ENCODE measurements at regions of chr3 and their contacts with region 1.

Region 1: DNA sequence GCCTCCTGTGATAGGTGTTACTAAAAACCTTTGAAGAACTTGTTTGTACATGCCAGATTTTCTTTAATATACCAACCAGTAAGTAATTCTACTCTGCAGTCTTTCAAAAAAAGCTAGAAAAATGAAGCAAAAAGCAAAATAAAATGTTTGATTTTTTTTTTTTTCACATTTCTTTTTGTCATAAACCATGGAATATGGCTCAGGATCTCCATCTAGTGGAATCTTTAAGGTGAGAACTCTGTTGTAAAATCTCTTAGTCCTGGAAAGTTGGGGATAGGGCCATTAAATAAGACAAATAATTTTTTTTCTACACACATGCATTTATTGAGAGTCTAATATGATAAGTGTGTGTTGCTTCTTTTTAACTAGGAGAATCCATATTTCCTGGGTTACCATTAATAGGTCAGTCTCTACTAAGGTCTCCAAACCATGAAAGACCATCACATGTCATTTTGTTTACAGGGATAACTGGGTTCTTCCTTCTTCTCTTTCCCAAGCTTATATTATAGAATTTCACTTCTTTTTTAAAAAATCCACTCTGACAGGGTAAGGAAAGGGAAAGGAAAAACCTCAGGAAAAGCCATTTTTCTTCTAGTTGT is 84.6 kb downstream of the SLC9A9 start:
- DNase-seq: no peak
- H3K4me3 ChIP-seq: no peak overlapping the region
- H3K27ac ChIP-seq: no peak overlapping the region
- H3K4me1 ChIP-seq: no peaks in the 10 kb centered on the region
- H3K27me3 ChIP-seq: no peaks in the 10 kb centered on the region
- CTCF ChIP-seq: peak; percentile 54 to 59

Region 2: GRCh38 chr3:143070977-143071551 is 692.6 kb before region 1 on chr3:
- CTCF ChIA-PET with region 1: no interaction called
- dilution Hi-C with region 1: no loop called
- in situ Hi-C with region 1: no loop called
- intact Hi-C with region 1: loop called (anchors 1 kb)
- DNase-seq: peak; percentile 79
- H3K4me3 ChIP-seq: no peak overlapping the region
- H3K27ac ChIP-seq: peak overlapping the region; percentile 52
- H3K4me1 ChIP-seq: peaks cover 16% of the 10 kb centered on the region
- H3K27me3 ChIP-seq: no peaks in the 10 kb centered on the region
- CTCF ChIP-seq: peak; percentile 12 to 18

Region 3: GRCh38 chr3:143119009-143119914 is 644.4 kb before region 1 on chr3 and contains the start of gene CHST2:
- CTCF ChIA-PET with region 1: no interaction called
- dilution Hi-C with region 1: no loop called
- in situ Hi-C with region 1: no loop called
- intact Hi-C with region 1: loop called (anchors 1 kb)
- DNase-seq: peak; percentile 81
- H3K4me3 ChIP-seq: peak within 1 kb of the TSS; percentile 78 to 81 (median 80)
- H3K27ac ChIP-seq: no peak within 1 kb of the TSS
- H3K4me1 ChIP-seq: peaks cover 11% of the 10 kb centered on the region
- H3K27me3 ChIP-seq: no peaks in the 10 kb centered on the region
- CTCF ChIP-seq: no peak
- total RNA-seq, gene CHST2: 12.4 to 17.0 TPM

Region 4: DNA sequence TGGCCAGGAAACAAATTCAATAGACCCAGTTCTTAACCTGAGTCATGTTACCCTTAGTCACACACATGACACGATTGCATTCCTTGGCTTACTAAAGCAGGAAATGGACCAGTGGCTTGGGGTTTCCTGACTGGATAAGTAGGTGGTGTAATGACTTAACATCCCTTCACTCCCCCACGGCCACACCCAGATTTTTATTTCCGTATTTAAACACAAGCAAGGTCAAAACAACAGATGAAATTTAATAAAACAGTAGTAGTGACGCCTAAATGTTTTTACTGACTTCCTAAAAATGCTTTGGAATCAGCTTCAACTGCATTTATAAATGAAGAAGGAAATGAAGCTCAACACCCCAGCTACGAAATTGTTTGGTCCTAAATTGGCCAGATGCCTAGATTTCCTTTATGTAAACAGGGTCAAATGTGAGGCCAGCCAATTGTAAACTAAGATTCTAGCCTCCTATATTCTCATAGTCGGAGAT is 319.8 kb before region 1 on chr3:
- CTCF ChIA-PET with region 1: no interaction called
- dilution Hi-C with region 1: no loop called
- in situ Hi-C with region 1: loop called in 1 of 2 experiments (anchors 25 kb)
- intact Hi-C with region 1: loop called (anchors 5 kb)
- DNase-seq: peak; percentile 97
- H3K4me3 ChIP-seq: no peak overlapping the region
- H3K27ac ChIP-seq: peak overlapping the region; percentile 91
- H3K4me1 ChIP-seq: peaks cover 27% of the 10 kb centered on the region
- H3K27me3 ChIP-seq: no peaks in the 10 kb centered on the region
- CTCF ChIP-seq: no peak

Region 5: DNA sequence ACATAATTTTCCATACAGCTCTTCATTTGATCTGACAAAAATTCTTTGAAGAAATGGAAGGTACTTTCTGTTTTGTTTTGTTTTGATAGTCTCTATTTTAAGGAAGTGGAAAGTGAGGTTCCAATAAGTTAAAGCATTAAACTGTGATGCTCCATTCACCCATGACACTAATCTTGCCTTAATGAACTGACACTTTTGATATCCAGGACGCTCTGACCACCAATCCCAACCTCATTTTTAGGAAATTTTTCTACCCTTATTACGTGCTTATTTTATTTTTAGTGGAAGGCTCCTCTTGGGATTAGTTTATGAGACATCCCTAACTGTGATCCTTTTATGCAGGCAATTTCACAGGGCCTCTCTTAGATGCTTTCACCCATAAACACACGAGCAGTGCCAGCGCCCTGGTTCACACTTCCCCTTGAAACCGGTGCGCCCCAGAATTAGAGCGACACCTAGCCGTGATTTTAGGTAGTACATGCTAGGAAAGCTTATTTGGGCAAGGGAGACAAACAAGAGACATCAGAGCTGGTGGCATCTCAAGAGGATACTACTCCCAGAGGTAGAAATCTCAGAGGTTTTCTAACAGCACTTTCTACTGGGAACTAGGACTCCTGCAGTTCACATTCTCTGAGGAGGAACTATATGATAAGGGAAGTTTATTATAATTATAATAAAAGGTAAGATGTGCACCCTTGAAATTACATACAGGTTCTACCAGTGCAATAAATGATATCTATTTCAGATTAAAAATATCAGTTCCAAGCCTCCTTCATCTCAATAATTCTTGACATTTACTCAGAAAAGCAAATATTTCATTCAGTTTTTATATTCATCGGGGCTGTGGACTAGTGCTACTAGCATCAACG is 89.3 kb before region 1 on chr3:
- CTCF ChIA-PET with region 1: no interaction called
- dilution Hi-C with region 1: loop called (anchors 5 kb)
- in situ Hi-C with region 1: no loop called
- intact Hi-C with region 1: loop called (anchors 1 kb)
- DNase-seq: peak; percentile 59
- H3K4me3 ChIP-seq: no peak overlapping the region
- H3K27ac ChIP-seq: no peak overlapping the region
- H3K4me1 ChIP-seq: peaks cover 3% of the 10 kb centered on the region
- H3K27me3 ChIP-seq: no peaks in the 10 kb centered on the region
- CTCF ChIP-seq: peak; percentile 91 to 95

Region 6: DNA sequence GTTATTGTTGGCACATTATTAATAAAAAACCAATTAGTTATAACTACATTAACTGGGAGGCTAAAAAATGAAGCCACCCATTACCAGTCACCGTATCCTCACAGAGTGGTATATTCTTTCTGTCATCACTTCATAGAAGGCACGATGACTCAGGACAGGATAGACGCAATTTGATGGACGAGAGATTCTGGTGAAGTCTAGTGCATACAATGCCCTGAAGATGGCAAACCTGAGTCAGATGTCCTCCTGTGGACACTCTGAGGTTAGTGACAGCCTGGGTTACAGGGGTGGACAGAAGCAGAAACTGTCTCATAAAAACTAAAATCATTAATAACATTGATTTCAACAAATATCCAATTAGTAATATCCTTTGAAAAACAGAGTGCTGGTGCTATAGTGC is 65.7 kb before region 1 on chr3:
- CTCF ChIA-PET with region 1: no interaction called
- dilution Hi-C with region 1: no loop called
- in situ Hi-C with region 1: no loop called
- intact Hi-C with region 1: loop called (anchors 2 kb)
- DNase-seq: peak; percentile 4
- H3K4me3 ChIP-seq: no peak overlapping the region
- H3K27ac ChIP-seq: no peak overlapping the region
- H3K4me1 ChIP-seq: peaks cover 3% of the 10 kb centered on the region
- H3K27me3 ChIP-seq: no peaks in the 10 kb centered on the region
- CTCF ChIP-seq: peak in 1 of 2 donors; percentile 28

Region 7: DNA sequence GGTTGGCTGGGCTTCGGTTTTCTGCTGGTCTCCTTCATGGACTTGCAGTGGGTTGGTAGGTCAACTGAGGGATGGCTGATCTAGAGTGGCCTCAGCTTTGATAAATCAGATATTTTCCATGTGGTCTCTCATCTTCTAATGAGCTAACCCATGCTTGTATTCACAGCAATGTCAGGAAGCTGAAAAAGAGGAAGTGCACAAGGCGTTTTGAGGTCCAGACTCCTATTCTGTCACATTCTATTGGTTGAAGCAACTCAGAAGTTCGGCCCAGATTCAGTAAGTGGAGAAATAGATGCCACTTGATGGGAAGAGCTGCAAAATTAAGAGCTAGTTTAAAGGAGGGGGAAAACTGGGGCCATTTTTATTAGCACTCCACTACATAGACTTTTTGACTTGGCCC is 569.2 kb after region 1 on chr3:
- CTCF ChIA-PET with region 1: no interaction called
- dilution Hi-C with region 1: no loop called
- in situ Hi-C with region 1: no loop called
- intact Hi-C with region 1: no loop called
- DNase-seq: no peak
- H3K4me3 ChIP-seq: no peak overlapping the region
- H3K27ac ChIP-seq: no peak overlapping the region
- H3K4me1 ChIP-seq: no peaks in the 10 kb centered on the region
- H3K27me3 ChIP-seq: no peaks in the 10 kb centered on the region
- CTCF ChIP-seq: no peak

Measured in mammary epithelial cell (primary cell).